Activated T-helper 1 cell treated with anti-CD3 and anti-CD28 coated beads, Interleukin-12 subunit alpha, Interleukin-12 subunit beta, Interleukin-2, Interleukin-4 antibody, amounts not matched to agents 30 ng/mL and 10 ng/mL and 1 ng/mL, durations not matched to agents 14 hours and 24 hours and 36 hours (primary cell): ENCODE measurements at regions of chr13 and their contacts with region 1.

Region 1: GRCh38 chr13:31161828-31162590 is at the start of gene HSPH1:
- DNase-seq: peak; percentile 99
- H3K4me3 Mint-ChIP-seq: peak within 1 kb of the TSS; percentile 98
- H3K27ac Mint-ChIP-seq: peak within 1 kb of the TSS; percentile 96
- H3K4me1 Mint-ChIP-seq: peaks cover 44% of the 10 kb centered on the region
- H3K27me3 Mint-ChIP-seq: no peaks in the 10 kb centered on the region
- total RNA-seq, gene HSPH1: 310 and 326 TPM in 2 replicates

Region 2: DNA sequence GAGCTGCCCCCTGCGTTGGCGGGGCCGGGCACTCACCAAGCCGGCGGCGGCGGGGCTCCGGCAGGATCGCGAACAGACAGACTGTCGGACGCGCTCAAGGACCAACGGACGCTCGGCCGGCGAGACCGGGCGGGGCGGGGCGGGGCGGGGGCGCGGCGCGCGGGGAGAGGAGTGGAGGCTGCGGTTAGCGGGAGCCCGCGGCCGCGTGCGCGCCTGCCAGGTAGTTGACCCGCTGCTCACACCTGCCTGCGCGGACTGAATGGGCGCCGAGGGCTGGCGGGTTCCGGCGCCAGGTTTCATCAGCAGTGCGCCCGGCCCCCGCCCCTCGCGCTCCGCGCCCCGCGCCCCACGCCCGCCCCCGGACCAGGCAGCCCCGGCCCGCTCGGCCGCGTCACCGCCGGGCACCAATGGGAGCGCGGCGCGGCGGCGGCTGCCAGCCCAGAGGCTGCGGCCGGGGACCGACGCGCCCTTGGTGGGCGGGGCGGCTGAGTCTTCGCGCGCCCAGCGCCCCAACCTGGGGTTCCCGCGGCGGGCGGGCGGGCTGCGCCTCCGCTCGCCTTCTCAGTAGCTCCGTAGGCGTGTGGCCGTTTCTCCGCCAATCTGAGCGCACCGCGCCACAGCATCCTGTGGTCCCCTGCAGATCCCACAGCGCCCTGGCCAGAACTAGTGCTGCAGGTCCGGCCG is 1566.5 kb before region 1 on chr13 and contains the start of gene SLC7A1:
- intact Hi-C with region 1: loop called (anchors 1 kb)
- DNase-seq: peak; percentile 88
- H3K4me3 Mint-ChIP-seq: peak within 1 kb of the TSS; percentile 95
- H3K27ac Mint-ChIP-seq: peak within 1 kb of the TSS; percentile 95
- H3K4me1 Mint-ChIP-seq: peaks cover 51% of the 10 kb centered on the region
- H3K27me3 Mint-ChIP-seq: peaks cover 6% of the 10 kb centered on the region
- total RNA-seq, gene SLC7A1: 128 and 138 TPM in 2 replicates

Region 3: GRCh38 chr13:30142486-30143211 is 1019.4 kb before region 1 on chr13:
- intact Hi-C with region 1: loop called (anchors 5 kb)
- DNase-seq: peak; percentile 28
- H3K4me3 Mint-ChIP-seq: peak overlapping the region; percentile 31
- H3K27ac Mint-ChIP-seq: peak overlapping the region; percentile 86
- H3K4me1 Mint-ChIP-seq: peaks cover 61% of the 10 kb centered on the region
- H3K27me3 Mint-ChIP-seq: peaks cover 4% of the 10 kb centered on the region

Region 4: GRCh38 chr13:30422054-30422839 is 739.8 kb before region 1 on chr13 and contains the start of gene UBE2L5:
- intact Hi-C with region 1: loop called (anchors 1 kb)
- DNase-seq: peak; percentile 75
- H3K4me3 Mint-ChIP-seq: peak within 1 kb of the TSS; percentile 88
- H3K27ac Mint-ChIP-seq: peak within 1 kb of the TSS; percentile 86
- H3K4me1 Mint-ChIP-seq: peaks cover 26% of the 10 kb centered on the region
- H3K27me3 Mint-ChIP-seq: peaks cover 4% of the 10 kb centered on the region
- total RNA-seq, gene UBE2L5: not detected in 2 replicates

Region 5: GRCh38 chr13:30943881-30944280 is 218.1 kb before region 1 on chr13:
- intact Hi-C with region 1: no loop called
- DNase-seq: no peak
- H3K4me3 Mint-ChIP-seq: no peak overlapping the region
- H3K27ac Mint-ChIP-seq: no peak overlapping the region
- H3K4me1 Mint-ChIP-seq: no peaks in the 10 kb centered on the region
- H3K27me3 Mint-ChIP-seq: peaks cover 26% of the 10 kb centered on the region

Region 6: GRCh38 chr13:31073859-31074718 is 87.9 kb before region 1 on chr13:
- intact Hi-C with region 1: loop called (anchors 1 kb)
- DNase-seq: no peak
- H3K4me3 Mint-ChIP-seq: no peak overlapping the region
- H3K27ac Mint-ChIP-seq: no peak overlapping the region
- H3K4me1 Mint-ChIP-seq: peaks cover 12% of the 10 kb centered on the region
- H3K27me3 Mint-ChIP-seq: no peaks in the 10 kb centered on the region

Region 7: GRCh38 chr13:31199849-31200636 is 38.0 kb after region 1 on chr13 and contains the start of gene B3GLCT:
- intact Hi-C with region 1: loop called (anchors 1 kb)
- DNase-seq: peak; percentile 76
- H3K4me3 Mint-ChIP-seq: peak within 1 kb of the TSS; percentile 85
- H3K27ac Mint-ChIP-seq: peak within 1 kb of the TSS; percentile 80
- H3K4me1 Mint-ChIP-seq: peaks cover 32% of the 10 kb centered on the region
- H3K27me3 Mint-ChIP-seq: peaks cover 2% of the 10 kb centered on the region
- total RNA-seq, gene B3GLCT: 4.2 and 4.3 TPM in 2 replicates